ENCODE measurements at regions of chrX and their contacts with region 1.

Region 1: GRCh38 chrX:9482408-9482807 is 17.6 kb downstream of the TBL1X start:
- DNase-seq: no peak
- H3K4me3 ChIP-seq: no peak overlapping the region
- H3K27ac ChIP-seq: no peak overlapping the region
- H3K4me1 ChIP-seq: no peaks in the 10 kb centered on the region
- H3K27me3 ChIP-seq: no peaks in the 10 kb centered on the region
- CTCF ChIP-seq: no peak
- EP300 ChIP-seq: no peak
- POLR2A ChIP-seq: no peak

Region 2: GRCh38 chrX:9241427-9241826 is 241.0 kb before region 1 on chrX:
- in situ Hi-C with region 1: no loop called
- intact Hi-C with region 1: no loop called
- DNase-seq: no peak
- H3K4me3 ChIP-seq: no peak overlapping the region
- H3K27ac ChIP-seq: no peak overlapping the region
- H3K4me1 ChIP-seq: no peaks in the 10 kb centered on the region
- H3K27me3 ChIP-seq: no peaks in the 10 kb centered on the region
- CTCF ChIP-seq: no peak
- EP300 ChIP-seq: no peak
- POLR2A ChIP-seq: no peak

Region 3: GRCh38 chrX:9644335-9644734 is 161.9 kb after region 1 on chrX:
- in situ Hi-C with region 1: no loop called
- intact Hi-C with region 1: loop called (anchors 10 kb)
- DNase-seq: no peak
- H3K4me3 ChIP-seq: no peak overlapping the region
- H3K27ac ChIP-seq: no peak overlapping the region
- H3K4me1 ChIP-seq: peaks cover 0 to 10% (median 3%) of the 10 kb centered on the region in 4 donors
- H3K27me3 ChIP-seq: no peaks in the 10 kb centered on the region
- CTCF ChIP-seq: no peak
- EP300 ChIP-seq: no peak
- POLR2A ChIP-seq: no peak

Measured in transverse colon (tissue), 4 donors.